ENCODE measurements at regions of chr10 and their contacts with region 1.

Region 1: DNA sequence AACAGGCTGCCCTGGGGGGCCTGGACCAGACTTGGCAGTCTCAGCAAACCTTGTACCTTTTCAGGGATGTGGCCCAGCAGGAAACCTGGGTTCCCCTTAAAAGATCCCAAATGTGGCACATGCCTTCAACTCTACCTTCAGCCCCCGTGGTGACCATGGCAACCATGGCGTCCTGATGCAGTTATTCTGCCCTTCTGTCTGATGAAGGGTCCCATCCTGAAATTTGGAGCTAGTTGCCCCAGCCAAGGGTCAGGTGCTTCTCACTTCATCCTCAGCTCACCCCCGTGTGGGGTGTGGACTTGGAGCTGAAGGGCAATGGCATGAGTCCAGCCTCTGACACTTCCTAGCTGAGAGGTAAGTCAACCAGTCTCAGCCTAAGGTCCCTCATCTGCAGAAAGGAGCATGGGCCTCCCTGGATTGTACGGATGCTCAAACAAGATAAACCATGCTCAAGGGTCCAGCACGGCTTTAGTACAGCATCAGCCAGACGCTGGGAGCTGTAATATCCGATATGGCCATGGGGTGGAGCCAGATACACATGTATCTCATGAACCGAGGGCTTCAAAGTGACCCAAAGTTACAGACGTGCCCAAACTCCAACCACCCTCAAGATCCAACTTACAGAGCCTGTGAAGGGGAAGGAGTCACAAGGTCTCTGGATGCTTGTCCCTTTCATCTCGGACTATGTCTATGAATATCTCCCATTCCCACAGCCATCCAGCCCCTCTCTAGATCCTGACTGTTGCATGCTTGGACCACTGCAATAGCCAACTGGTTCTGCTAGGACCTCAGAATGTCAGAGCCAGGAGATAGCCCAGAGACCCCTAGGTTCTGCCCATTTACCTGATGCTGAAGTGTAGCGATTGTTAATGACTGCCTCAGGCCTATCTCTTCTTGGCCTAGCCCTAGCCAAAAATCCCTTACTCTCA is 142.5 kb downstream of the SH3PXD2A start:
- DNase-seq: peak; percentile 60 to 90 (median 81)
- ATAC-seq: peak; percentile 68 to 88 (median 82)
- H3K4me3 ChIP-seq: no peak overlapping the region
- H3K27ac ChIP-seq: no peak overlapping the region
- H3K4me1 ChIP-seq: peaks cover 0 to 5% (median 0%) of the 10 kb centered on the region in 3 donors
- H3K27me3 ChIP-seq: no peaks in the 10 kb centered on the region
- CTCF ChIP-seq: peak; percentile 79 to 86 (median 84)

Region 2: GRCh38 chr10:103278862-103279298 is 434.0 kb before region 1 on chr10:
- intact Hi-C with region 1: no loop called
- DNase-seq: peak in 3 of 6 donors; percentile 30 to 66 (median 38)
- ATAC-seq: peak in 3 of 4 donors; percentile 19 to 57 (median 23)
- H3K4me3 ChIP-seq: no peak overlapping the region
- H3K27ac ChIP-seq: no peak overlapping the region
- H3K4me1 ChIP-seq: peaks cover 0 to 3% (median 0%) of the 10 kb centered on the region in 3 donors
- H3K27me3 ChIP-seq: peaks cover 0 to 30% (median 6%) of the 10 kb centered on the region in 4 donors
- CTCF ChIP-seq: no peak

Region 3: DNA sequence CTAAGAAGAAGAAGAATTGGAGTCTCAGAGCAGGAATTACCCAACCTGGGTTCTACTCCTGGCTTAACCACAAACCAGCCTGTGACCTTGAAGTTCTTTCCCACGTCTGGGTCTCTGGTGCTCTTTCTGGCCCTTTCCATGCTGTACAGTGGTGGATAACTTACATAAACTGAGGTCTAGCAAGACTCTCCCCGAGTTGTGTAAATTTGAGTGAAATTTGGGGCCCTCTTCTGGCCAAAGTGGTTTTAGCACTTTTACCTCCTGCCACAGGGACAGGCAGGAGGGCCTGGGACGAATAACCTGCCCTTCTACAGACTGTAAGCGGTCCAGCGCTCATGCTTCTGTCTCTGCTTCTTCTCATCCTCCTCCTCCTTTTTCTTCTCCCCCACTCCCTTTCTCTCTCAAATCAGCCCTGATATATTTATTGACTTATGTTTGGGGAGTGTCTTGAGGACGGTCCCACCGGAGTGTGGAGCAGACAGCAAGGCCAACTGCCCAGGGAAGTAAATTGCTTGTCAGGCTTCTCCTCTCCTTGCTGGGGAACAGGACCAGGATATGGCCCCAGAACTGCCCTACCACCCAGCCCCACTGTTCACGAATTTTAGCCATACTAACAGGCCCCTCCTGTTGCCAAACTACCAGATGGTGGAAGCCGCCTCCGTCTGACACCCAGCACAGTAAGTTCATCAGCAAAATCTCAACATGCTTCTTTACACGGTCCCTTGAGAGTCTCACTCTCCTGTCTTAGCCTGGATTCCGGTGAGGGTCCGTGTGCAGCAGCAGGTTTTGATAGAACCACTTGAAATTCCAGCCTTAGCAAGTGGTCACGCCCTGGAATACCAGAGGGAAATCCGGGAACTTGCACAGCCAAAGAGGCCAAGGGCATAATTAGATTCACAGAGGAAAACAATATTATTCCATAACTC is 146.6 kb after region 1 on chr10:
- intact Hi-C with region 1: loop called in 2 of 3 experiments (anchors 2 kb)
- DNase-seq: peak in 3 of 6 donors; percentile 43 to 78 (median 53)
- ATAC-seq: peak; percentile 65 to 83 (median 78)
- H3K4me3 ChIP-seq: no peak overlapping the region
- H3K27ac ChIP-seq: no peak overlapping the region
- H3K4me1 ChIP-seq: no peaks in the 10 kb centered on the region
- H3K27me3 ChIP-seq: no peaks in the 10 kb centered on the region
- CTCF ChIP-seq: peak; percentile 40 to 61 (median 46)

Region 4: DNA sequence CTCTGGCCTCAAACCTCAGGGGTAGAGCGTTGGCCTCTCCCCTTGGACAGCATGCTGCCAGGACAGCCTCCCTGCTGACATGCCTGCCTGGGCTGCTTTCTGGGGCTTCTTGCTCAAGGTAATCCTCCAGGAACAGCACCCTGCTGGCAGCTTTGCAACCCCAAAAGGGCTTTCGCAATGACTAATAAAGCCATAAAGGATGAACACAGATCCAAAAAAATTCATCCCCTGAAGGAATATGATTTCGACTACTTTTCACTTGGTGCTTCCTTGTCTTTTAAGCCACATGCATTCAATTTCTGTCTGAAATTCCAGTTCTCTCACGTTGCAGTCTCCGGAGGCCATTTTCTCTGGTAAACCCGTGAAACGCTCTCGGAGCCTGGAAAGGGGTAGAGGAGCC is 157.7 kb after region 1 on chr10:
- intact Hi-C with region 1: loop called in 2 of 3 experiments (anchors 5 to 10 kb)
- DNase-seq: no peak
- ATAC-seq: no peak
- H3K4me3 ChIP-seq: no peak overlapping the region
- H3K27ac ChIP-seq: no peak overlapping the region
- H3K4me1 ChIP-seq: no peaks in the 10 kb centered on the region
- H3K27me3 ChIP-seq: no peaks in the 10 kb centered on the region
- CTCF ChIP-seq: no peak